Endothelial cell of umbilical vein (primary cell): ENCODE measurements at regions of chr19 and their contacts with region 1.

Region 1: GRCh38 chr19:17859533-17860330 is at the start of gene RPL18A:
- DNase-seq: peak; percentile 100
- H3K4me3 ChIP-seq: peak within 1 kb of the TSS; percentile 83 to 96 (median 92)
- H3K27ac ChIP-seq: peak within 1 kb of the TSS; percentile 42
- H3K4me1 ChIP-seq: peaks cover 15% of the 10 kb centered on the region
- H3K27me3 ChIP-seq: no peaks in the 10 kb centered on the region
- CTCF ChIP-seq: peak; percentile 84 to 90
- POLR2A ChIP-seq: peak; percentile 96
- total RNA-seq, gene RPL18A: 1,947 and 1,970 TPM in 2 replicates

Region 2: GRCh38 chr19:17441241-17442021 is 418.3 kb before region 1 on chr19:
- CTCF ChIA-PET with region 1: interaction called, 13 read pairs
- POLR2A ChIA-PET with region 1: no interaction called
- dilution Hi-C with region 1: no loop called
- intact Hi-C with region 1: loop called (anchors 1 kb)
- DNase-seq: peak; percentile 28
- H3K4me3 ChIP-seq: no peak overlapping the region
- H3K27ac ChIP-seq: no peak overlapping the region
- H3K4me1 ChIP-seq: no peaks in the 10 kb centered on the region
- H3K27me3 ChIP-seq: peaks cover 2 to 3% of the 10 kb centered on the region in 2 experiments
- CTCF ChIP-seq: peak; percentile 37 to 57
- POLR2A ChIP-seq: no peak

Region 3: DNA sequence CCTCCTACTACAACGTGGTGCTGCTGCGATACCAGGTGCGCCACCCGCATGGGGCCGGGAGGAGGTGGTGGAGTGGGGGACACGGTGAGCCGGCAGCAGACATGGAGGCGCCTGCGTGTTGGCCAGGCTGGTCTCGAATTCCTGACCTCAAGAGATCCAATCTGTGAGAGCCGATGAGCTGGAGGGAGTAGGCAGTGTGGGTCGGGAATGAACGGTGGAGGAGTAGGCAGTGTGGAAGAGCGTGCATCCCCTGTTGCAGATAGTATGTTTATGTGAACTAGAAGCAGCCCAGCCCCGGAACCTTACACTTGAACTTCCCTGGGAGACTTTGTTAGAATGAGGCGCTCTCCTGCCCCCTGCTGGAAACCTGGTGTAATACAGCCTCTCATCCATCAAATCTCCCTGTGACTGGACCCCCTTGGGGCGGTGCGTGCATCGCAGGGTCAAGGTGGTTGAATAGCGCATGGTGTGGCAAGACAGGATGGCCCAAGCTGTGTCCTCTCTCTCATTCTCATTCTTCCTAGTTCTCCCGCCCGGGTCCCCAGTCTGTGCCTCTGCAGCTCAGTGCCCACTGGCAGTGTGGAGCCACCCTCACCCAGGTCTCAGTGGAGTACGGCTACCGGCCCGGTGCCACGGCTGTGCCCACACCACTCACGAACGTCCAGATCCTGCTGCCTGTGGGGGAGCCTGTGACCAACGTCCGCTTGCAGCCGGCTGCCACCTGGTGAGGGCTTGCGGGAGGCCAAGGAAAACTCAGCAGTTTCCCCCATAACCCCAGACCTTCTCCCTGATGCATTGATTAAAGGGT is 75.3 kb before region 1 on chr19:
- CTCF ChIA-PET with region 1: interaction called, 5 read pairs
- POLR2A ChIA-PET with region 1: no interaction called
- dilution Hi-C with region 1: no loop called
- intact Hi-C with region 1: loop called (anchors 1 kb)
- DNase-seq: peak; percentile 55
- H3K4me3 ChIP-seq: no peak overlapping the region
- H3K27ac ChIP-seq: no peak overlapping the region
- H3K4me1 ChIP-seq: no peaks in the 10 kb centered on the region
- H3K27me3 ChIP-seq: no peaks in the 10 kb centered on the region
- CTCF ChIP-seq: peak; percentile 74 to 82
- POLR2A ChIP-seq: no peak

Region 4: GRCh38 chr19:17847538-17848366 is 12.0 kb before region 1 on chr19 and contains the start of gene JAK3:
- CTCF ChIA-PET with region 1: interaction called, 13 read pairs
- POLR2A ChIA-PET with region 1: interaction called, 7 read pairs
- dilution Hi-C with region 1: no loop called
- intact Hi-C with region 1: no loop called
- DNase-seq: peak; percentile 70
- H3K4me3 ChIP-seq: peak within 1 kb of the TSS in 1 of 3 experiments; percentile 45
- H3K27ac ChIP-seq: no peak within 1 kb of the TSS
- H3K4me1 ChIP-seq: peaks cover under 1% of the 10 kb centered on the region
- H3K27me3 ChIP-seq: no peaks in the 10 kb centered on the region
- CTCF ChIP-seq: no peak
- POLR2A ChIP-seq: no peak
- total RNA-seq, gene JAK3: 3.1 and 3.4 TPM in 2 replicates

Region 5: GRCh38 chr19:17932485-17933338 is 73.0 kb after region 1 on chr19 and contains the start of gene CCDC124:
- CTCF ChIA-PET with region 1: interaction called, 107 read pairs
- POLR2A ChIA-PET with region 1: interaction called, 18 read pairs
- dilution Hi-C with region 1: no loop called
- intact Hi-C with region 1: loop called (anchors 1 kb)
- DNase-seq: peak; percentile 92
- H3K4me3 ChIP-seq: peak within 1 kb of the TSS; percentile 93 to 98 (median 95)
- H3K27ac ChIP-seq: peak within 1 kb of the TSS; percentile 91
- H3K4me1 ChIP-seq: peaks cover 16% of the 10 kb centered on the region
- H3K27me3 ChIP-seq: no peaks in the 10 kb centered on the region
- CTCF ChIP-seq: peak; percentile 92 to 96
- POLR2A ChIP-seq: peak; percentile 78
- total RNA-seq, gene CCDC124: 115 and 123 TPM in 2 replicates